ENCODE measurements at regions of chr9 and their contacts with region 1.

Region 1: DNA sequence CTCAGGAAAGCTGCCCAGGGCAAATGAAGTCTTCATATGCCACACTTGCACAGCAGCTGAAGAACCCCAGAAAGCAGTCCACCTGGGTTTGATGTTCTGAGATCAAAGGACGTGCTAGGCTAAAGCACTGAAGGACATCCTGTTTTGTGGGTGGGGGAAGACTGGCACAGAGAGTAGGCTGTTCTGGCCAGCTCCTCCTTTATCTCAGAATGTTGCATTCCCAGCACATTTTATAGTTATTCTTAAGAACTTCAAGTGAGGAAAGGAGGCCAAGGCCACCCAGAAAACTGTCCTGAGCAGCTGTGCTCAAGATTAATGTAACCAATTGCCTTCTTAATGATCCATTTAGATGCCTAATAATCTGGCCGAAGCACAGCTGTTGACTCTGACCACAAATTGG is 10.9 kb downstream of the SHOC1 start:
- DNase-seq: no peak

Region 2: GRCh38 chr9:111743275-111743674 is 40.6 kb before region 1 on chr9:
- intact Hi-C with region 1: no loop called
- DNase-seq: no peak

Region 3: GRCh38 chr9:111803924-111804323 is 20.1 kb after region 1 on chr9:
- intact Hi-C with region 1: no loop called
- DNase-seq: no peak

Region 4: DNA sequence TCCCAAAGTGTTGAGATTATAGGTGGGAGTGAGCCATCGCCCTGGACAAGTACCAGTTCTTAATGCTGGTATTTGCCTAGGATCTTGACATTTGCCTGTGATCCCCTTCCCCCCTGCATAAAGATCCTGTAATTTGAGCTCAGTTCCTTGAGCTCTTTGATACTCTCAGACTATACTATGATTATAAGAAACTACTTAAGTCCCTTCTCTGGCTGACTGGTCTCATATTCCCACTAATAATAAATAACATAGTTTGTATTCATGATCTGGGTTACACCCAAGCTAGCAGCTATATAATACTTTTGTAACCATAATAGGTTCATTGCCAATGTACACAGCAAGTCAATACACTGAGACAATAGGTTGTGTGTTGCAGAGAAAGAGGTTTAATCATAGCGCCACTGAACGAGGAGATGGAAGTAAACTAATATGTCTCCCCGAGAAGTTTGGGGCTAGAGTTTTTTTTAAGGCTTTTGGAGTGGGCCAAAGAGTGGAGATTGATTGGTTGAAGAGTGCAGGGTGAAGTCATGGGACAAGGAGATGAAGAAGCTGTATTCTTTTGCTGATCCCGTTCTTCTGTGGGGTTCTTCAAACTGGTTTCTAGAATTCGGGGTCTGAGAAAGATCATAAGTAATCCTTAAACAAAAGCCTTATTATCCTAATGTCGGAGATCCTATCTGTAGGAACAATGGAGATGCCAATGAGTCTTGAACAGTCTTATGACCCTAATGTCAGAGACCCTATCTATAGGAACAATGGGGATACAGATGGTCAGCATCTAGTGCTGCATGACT is 31.6 kb after region 1 on chr9:
- intact Hi-C with region 1: no loop called
- DNase-seq: no peak

Region 5: DNA sequence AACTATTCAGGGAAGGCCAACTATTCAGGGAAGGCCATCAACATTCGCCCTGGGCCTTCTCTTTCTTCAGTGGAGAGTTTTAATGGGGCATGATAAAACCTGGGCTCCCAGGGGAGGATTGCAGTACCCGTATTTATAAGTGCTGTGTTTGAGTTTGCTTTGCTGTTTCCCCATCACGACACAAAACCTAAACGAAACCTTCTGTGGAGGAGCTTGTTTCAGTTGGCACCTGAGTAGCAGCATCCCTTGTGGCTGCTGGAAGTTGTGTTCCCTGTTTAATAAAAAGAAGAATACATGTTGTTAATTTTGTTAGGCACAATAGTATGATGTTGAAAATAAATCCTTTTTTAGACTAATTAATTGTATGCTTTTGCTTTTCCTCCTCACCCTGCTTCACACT is 1547.9 kb after region 1 on chr9:
- intact Hi-C with region 1: loop called in 1 of 2 experiments (anchors 10 kb)
- DNase-seq: no peak